Activated CD4-positive, alpha-beta T cell treated with anti-CD3 and anti-CD28 coated beads, Interleukin-2, amount 10 ng/mL, durations not matched to agents 7 days and 5 days (primary cell): ENCODE measurements at regions of chr10 and their contacts with region 1.

Region 1: GRCh38 chr10:89391917-89392756 is at the start of gene IFIT1:
- DNase-seq: peak; percentile 81
- H3K4me3 Mint-ChIP-seq: peak within 1 kb of the TSS; percentile 86
- H3K27ac Mint-ChIP-seq: peak within 1 kb of the TSS; percentile 95
- H3K4me1 Mint-ChIP-seq: peaks cover 47% of the 10 kb centered on the region
- H3K27me3 Mint-ChIP-seq: no peaks in the 10 kb centered on the region
- total RNA-seq, gene IFIT1: 42.9 to 45.0 TPM

Region 2: GRCh38 chr10:89327784-89328441 is 64.2 kb before region 1 on chr10 and contains the start of gene IFIT3:
- CTCF ChIA-PET with region 1: interaction called, 3 read pairs
- POLR2A ChIA-PET with region 1: interaction called, 13 read pairs
- DNase-seq: peak; percentile 42
- H3K4me3 Mint-ChIP-seq: peak within 1 kb of the TSS; percentile 82
- H3K27ac Mint-ChIP-seq: peak within 1 kb of the TSS; percentile 86
- H3K4me1 Mint-ChIP-seq: peaks cover 61% of the 10 kb centered on the region
- H3K27me3 Mint-ChIP-seq: peaks cover 3% of the 10 kb centered on the region
- total RNA-seq, gene IFIT3: 51.1 to 55.4 TPM

Region 3: GRCh38 chr10:89404104-89405047 is 12.2 kb after region 1 on chr10:
- CTCF ChIA-PET with region 1: no interaction called
- POLR2A ChIA-PET with region 1: no interaction called
- DNase-seq: no peak
- H3K4me3 Mint-ChIP-seq: no peak overlapping the region
- H3K27ac Mint-ChIP-seq: no peak overlapping the region
- H3K4me1 Mint-ChIP-seq: peaks cover 22% of the 10 kb centered on the region
- H3K27me3 Mint-ChIP-seq: no peaks in the 10 kb centered on the region